ENCODE measurements at regions of chr12 and their contacts with region 1.

Region 1: GRCh38 chr12:116703214-116703795 is 34.6 kb downstream of the SPRING1 start:
- DNase-seq: peak; percentile 80
- ATAC-seq: peak; percentile 69
- H3K4me3 Mint-ChIP-seq: no peak overlapping the region
- H3K27ac Mint-ChIP-seq: no peak overlapping the region
- H3K4me1 Mint-ChIP-seq: peaks cover 2% of the 10 kb centered on the region
- H3K27me3 Mint-ChIP-seq: peaks cover 2% of the 10 kb centered on the region

Region 2: DNA sequence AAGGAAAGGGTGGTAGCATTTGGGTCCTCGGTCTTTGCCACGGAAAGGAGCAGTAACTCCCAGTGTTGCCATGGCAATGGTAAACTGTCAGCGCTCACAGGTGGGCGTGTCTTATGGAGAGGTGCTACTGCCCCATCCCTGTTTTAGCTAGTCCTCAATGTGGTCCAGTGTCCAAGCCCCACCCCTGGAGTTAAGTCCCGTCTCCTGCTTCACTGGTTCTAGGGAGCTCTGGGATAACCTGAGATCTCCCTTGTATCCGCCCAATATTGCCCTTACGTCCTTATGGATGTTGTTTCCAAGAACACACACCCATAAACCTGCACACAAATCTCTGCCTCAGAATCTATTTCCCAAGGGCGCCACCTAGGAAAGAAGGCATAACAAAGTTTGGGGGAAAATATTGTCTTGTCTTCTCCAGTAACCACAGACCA is 29.6 kb before region 1 on chr12:
- CTCF ChIA-PET with region 1: no interaction called
- POLR2A ChIA-PET with region 1: no interaction called
- intact Hi-C with region 1: no loop called
- DNase-seq: peak; percentile 27
- ATAC-seq: peak; percentile 10
- H3K4me3 Mint-ChIP-seq: peak overlapping the region; percentile 55
- H3K27ac Mint-ChIP-seq: peak overlapping the region; percentile 87
- H3K4me1 Mint-ChIP-seq: peaks cover 34% of the 10 kb centered on the region
- H3K27me3 Mint-ChIP-seq: no peaks in the 10 kb centered on the region

Region 3: GRCh38 chr12:116689979-116690744 is 13.1 kb before region 1 on chr12:
- CTCF ChIA-PET with region 1: interaction called, 11 read pairs
- POLR2A ChIA-PET with region 1: no interaction called
- intact Hi-C with region 1: no loop called
- DNase-seq: no peak
- ATAC-seq: no peak
- H3K4me3 Mint-ChIP-seq: no peak overlapping the region
- H3K27ac Mint-ChIP-seq: no peak overlapping the region
- H3K4me1 Mint-ChIP-seq: peaks cover 3% of the 10 kb centered on the region
- H3K27me3 Mint-ChIP-seq: peaks cover 23% of the 10 kb centered on the region

Region 4: DNA sequence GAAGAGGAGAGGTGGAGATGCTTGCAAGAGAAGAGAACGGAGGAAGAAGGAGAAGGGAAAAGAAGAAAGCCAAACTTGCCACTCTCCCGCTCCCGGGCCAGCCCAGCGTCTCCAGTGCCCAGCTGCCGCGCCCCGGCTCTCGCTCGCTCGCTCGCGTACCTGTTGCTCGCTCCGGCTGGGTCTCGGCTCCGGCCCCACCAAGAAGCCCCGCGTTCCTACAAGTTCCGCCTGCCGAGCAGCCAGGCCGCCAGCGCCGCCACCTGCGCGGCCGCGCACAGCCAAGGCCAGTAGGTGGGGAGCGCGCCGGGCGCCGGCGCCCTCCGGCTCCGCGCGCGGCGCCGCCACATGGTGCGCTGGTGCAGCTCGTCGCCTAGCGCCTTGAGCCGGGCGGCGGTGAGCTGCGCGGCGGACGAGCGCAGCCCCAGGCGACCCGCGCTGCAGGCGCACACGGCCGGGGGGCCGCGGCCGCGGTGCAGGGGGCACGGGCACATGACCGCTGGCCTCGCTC is 177.6 kb after region 1 on chr12:
- CTCF ChIA-PET with region 1: no interaction called
- POLR2A ChIA-PET with region 1: no interaction called
- intact Hi-C with region 1: loop called (anchors 2 to 5 kb)
- DNase-seq: peak; percentile 66
- ATAC-seq: peak; percentile 86
- H3K4me3 Mint-ChIP-seq: peak overlapping the region; percentile 57
- H3K27ac Mint-ChIP-seq: no peak overlapping the region
- H3K4me1 Mint-ChIP-seq: peaks cover 35% of the 10 kb centered on the region
- H3K27me3 Mint-ChIP-seq: peaks cover 57% of the 10 kb centered on the region

Region 5: DNA sequence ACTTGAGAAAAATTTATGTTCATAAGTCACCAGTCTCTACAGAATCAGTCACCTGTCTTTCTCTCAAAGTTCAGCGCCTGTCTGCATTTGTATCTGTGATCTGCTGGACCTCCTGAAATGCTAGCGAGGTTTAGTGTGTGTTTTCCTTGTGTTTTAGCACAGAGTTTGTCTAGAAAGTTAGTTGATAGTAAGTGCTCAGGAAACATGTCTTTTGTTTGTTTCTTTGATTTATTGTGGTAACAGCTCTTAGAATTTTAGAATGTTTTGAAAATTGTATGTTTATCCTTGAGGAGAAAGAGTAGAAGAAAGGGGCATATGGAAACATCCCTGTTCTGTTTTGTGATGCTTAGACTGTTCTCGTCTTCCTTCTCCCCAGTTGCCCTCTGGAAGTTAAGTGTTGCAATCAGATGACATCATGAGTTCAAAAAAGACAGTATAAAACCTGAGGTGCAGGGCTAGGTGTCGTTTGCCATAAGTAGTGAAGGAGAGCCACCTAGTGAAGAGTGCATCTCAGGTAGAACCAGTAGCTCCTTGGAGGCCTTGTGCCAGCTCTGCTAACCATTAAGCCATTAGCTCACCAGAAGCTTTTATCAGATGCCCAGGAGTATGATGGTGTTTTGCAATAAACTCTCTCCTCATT is 252.2 kb after region 1 on chr12:
- CTCF ChIA-PET with region 1: interaction called, 7 read pairs
- POLR2A ChIA-PET with region 1: no interaction called
- intact Hi-C with region 1: loop called (anchors 2 kb)
- DNase-seq: peak; percentile 14
- ATAC-seq: no peak
- H3K4me3 Mint-ChIP-seq: no peak overlapping the region
- H3K27ac Mint-ChIP-seq: no peak overlapping the region
- H3K4me1 Mint-ChIP-seq: peaks cover 21% of the 10 kb centered on the region
- H3K27me3 Mint-ChIP-seq: no peaks in the 10 kb centered on the region

Region 6: GRCh38 chr12:117025481-117026151 is 322.3 kb after region 1 on chr12:
- CTCF ChIA-PET with region 1: interaction called, 3 read pairs
- POLR2A ChIA-PET with region 1: no interaction called
- intact Hi-C with region 1: loop called in 1 of 2 experiments (anchors 5 kb)
- DNase-seq: peak; percentile 72
- ATAC-seq: peak; percentile 86
- H3K4me3 Mint-ChIP-seq: no peak overlapping the region
- H3K27ac Mint-ChIP-seq: peak overlapping the region; percentile 61
- H3K4me1 Mint-ChIP-seq: peaks cover 4% of the 10 kb centered on the region
- H3K27me3 Mint-ChIP-seq: no peaks in the 10 kb centered on the region

Region 7: DNA sequence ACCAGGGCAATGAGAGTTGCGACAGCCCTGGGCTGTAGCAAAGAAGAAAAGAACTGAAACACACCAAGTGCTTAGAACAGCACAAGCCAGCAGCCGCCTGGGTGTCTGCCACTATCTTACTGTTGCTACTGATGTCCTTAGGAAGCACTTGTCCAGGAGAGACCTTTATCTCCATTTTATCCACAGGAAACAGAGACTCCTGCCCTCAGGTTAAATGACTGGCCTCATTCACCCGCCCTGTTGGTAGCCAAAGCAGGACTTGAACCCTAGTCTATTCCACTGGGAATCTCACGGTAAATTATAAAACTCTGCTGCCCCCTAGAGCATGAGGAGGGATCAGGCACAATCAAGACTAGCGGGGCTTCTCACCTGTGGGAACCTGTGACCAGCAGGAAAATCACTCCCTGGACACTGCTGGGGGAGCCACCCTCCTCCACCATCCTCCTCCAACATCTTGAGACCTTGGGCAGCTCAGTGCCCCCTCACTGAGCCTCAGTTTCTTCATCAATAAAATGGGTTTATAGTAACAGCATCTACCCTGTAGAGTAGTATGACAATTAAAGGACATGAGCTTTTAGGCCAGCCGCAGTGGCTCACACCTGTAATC is 416.4 kb after region 1 on chr12:
- CTCF ChIA-PET with region 1: interaction called, 4 read pairs
- POLR2A ChIA-PET with region 1: no interaction called
- intact Hi-C with region 1: loop called (anchors 1 to 2 kb)
- DNase-seq: peak; percentile 47
- ATAC-seq: peak; percentile 78
- H3K4me3 Mint-ChIP-seq: no peak overlapping the region
- H3K27ac Mint-ChIP-seq: no peak overlapping the region
- H3K4me1 Mint-ChIP-seq: peaks cover 6% of the 10 kb centered on the region
- H3K27me3 Mint-ChIP-seq: no peaks in the 10 kb centered on the region